ENCODE measurements at regions of chr15 and their contacts with region 1.

Region 1: DNA sequence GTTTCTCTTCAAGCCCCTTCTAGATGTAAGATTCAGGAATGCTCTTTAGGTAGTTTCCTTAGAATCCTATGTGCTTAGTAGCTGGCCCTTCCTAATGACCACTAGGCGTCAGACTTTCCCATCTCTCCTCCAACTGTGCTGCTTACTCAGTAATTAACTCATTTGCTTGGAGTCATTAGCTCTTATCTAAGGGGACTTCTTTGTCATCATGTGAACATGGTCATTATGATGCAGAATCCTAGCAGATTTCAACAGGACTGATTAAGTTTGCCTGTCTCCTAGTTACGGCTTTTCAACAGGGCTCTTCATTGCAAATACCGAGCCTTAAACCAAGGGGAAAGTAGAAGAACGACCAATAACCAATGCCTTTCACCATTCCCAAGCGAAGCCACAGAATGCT is 46.4 kb downstream of the GJD2 start:
- DNase-seq: peak; percentile 50
- H3K4me3 ChIP-seq: peak overlapping the region in 1 of 2 experiments; percentile 46; a peak in 1 of 4 replicates
- H3K27ac ChIP-seq: no peak overlapping the region
- H3K4me1 ChIP-seq: peaks cover 0 to 7% of the 10 kb centered on the region in 2 experiments; a peak in 2 of 4 replicates
- H3K27me3 ChIP-seq: 0 out of 2 replicates have a peak, but pooled peaks cover 4% of the 10 kb centered on the region
- CTCF ChIP-seq: peak; percentile 90
- EP300 ChIP-seq: no peak
- RAD21 ChIP-seq: peak; percentile 90

Region 2: GRCh38 chr15:34621675-34622074 is 86.7 kb before region 1 on chr15:
- CTCF ChIA-PET with region 1: interaction called, 35 read pairs
- POLR2A ChIA-PET with region 1: no interaction called
- DNase-seq: peak; percentile 14
- H3K4me3 ChIP-seq: no peak overlapping the region
- H3K27ac ChIP-seq: no peak overlapping the region
- H3K4me1 ChIP-seq: peaks cover 0 to 3% of the 10 kb centered on the region in 2 experiments; a peak in 3 of 4 replicates
- H3K27me3 ChIP-seq: no peaks in the 10 kb centered on the region
- CTCF ChIP-seq: peak; percentile 75
- EP300 ChIP-seq: no peak
- RAD21 ChIP-seq: peak; percentile 88

Region 3: GRCh38 chr15:34749691-34750090 is 41.3 kb after region 1 on chr15:
- CTCF ChIA-PET with region 1: interaction called, 13 read pairs
- POLR2A ChIA-PET with region 1: no interaction called
- DNase-seq: no peak
- H3K4me3 ChIP-seq: no peak overlapping the region
- H3K27ac ChIP-seq: no peak overlapping the region
- H3K4me1 ChIP-seq: no peaks in the 10 kb centered on the region; a peak in 1 of 4 replicates
- H3K27me3 ChIP-seq: peaks cover 10% of the 10 kb centered on the region
- CTCF ChIP-seq: no peak
- EP300 ChIP-seq: no peak
- RAD21 ChIP-seq: no peak

Region 4: GRCh38 chr15:34855397-34855796 is 147.0 kb after region 1 on chr15:
- CTCF ChIA-PET with region 1: interaction called, 15 read pairs
- POLR2A ChIA-PET with region 1: no interaction called
- DNase-seq: peak; percentile 25
- H3K4me3 ChIP-seq: no peak overlapping the region; a peak in 1 of 4 replicates
- H3K27ac ChIP-seq: peak overlapping the region; percentile 11 to 69; a peak in 3 of 4 replicates
- H3K4me1 ChIP-seq: peaks cover 8 to 22% of the 10 kb centered on the region in 2 experiments
- H3K27me3 ChIP-seq: no peaks in the 10 kb centered on the region
- CTCF ChIP-seq: no peak
- EP300 ChIP-seq: no peak
- RAD21 ChIP-seq: no peak

Region 5: DNA sequence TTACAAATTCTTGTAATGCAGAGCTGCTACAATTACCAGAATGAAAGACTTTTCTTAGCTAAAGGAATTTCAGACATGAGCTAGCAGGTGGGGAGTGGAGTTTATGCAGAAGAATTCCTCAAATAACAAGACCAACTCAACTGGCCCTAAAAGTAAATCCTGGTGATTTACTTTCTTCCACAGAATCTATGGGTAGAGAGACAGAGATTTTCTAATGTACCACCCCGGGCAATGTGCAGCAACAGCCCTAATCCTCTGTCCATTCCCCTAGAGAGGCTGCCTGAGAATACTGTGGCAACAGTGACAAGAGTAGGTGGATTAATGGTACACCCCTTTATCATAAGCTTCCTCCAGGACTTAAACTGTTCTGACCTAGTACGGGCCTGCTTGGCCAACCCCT is 205.9 kb after region 1 on chr15:
- CTCF ChIA-PET with region 1: interaction called, 28 read pairs
- POLR2A ChIA-PET with region 1: no interaction called
- DNase-seq: no peak
- H3K4me3 ChIP-seq: no peak overlapping the region
- H3K27ac ChIP-seq: no peak overlapping the region
- H3K4me1 ChIP-seq: no peaks in the 10 kb centered on the region
- H3K27me3 ChIP-seq: no peaks in the 10 kb centered on the region
- CTCF ChIP-seq: no peak
- EP300 ChIP-seq: no peak
- RAD21 ChIP-seq: no peak

Region 6: DNA sequence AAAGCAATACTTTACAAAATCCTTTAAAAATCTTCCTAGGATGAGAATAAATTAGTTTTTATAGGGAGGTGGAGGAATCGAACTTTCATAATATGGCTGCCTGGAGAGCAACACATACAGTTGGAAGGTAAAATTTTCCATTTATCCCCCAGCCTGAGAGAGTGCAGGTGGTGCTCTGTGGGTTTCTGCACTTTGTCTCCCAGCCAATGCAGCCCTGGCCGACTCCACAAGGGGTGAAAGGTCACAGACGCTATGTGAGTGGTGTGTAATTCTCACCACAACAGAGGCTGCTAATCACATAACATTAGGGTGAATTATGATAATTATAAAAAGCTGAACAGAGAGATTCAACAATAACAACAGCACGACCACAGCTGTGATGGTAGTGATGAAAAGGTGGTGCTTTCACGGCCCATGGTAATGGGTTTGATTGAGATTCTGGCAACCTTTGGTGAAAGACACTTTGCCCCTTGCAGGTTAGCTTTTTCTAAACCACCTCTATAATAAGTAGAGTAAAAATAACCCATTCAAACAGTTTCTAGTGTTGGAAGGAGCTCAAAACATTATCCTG is 406.8 kb after region 1 on chr15:
- CTCF ChIA-PET with region 1: no interaction called
- POLR2A ChIA-PET with region 1: no interaction called
- DNase-seq: no peak
- H3K4me3 ChIP-seq: no peak overlapping the region
- H3K27ac ChIP-seq: no peak overlapping the region
- H3K4me1 ChIP-seq: peaks cover 0 to 5% of the 10 kb centered on the region in 2 experiments; a peak in 2 of 4 replicates
- H3K27me3 ChIP-seq: no peaks in the 10 kb centered on the region
- CTCF ChIP-seq: no peak
- EP300 ChIP-seq: no peak
- RAD21 ChIP-seq: no peak

Measured in SK-N-SH (cell line).